ENCODE measurements at regions of chr10 and their contacts with region 1.

Region 1: GRCh38 chr10:89369156-89370105 is 8.4 kb upstream of the IFIT1B start:
- DNase-seq: no peak
- H3K4me3 Mint-ChIP-seq: no peak overlapping the region
- H3K27ac Mint-ChIP-seq: no peak overlapping the region
- H3K4me1 Mint-ChIP-seq: peaks cover 11% of the 10 kb centered on the region
- H3K27me3 Mint-ChIP-seq: no peaks in the 10 kb centered on the region

Region 2: GRCh38 chr10:88565072-88565471 is 804.4 kb before region 1 on chr10:
- CTCF ChIA-PET with region 1: no interaction called
- POLR2A ChIA-PET with region 1: no interaction called
- intact Hi-C with region 1: no loop called
- DNase-seq: no peak
- H3K4me3 Mint-ChIP-seq: no peak overlapping the region
- H3K27ac Mint-ChIP-seq: no peak overlapping the region
- H3K4me1 Mint-ChIP-seq: peaks cover 5% of the 10 kb centered on the region
- H3K27me3 Mint-ChIP-seq: no peaks in the 10 kb centered on the region

Region 3: DNA sequence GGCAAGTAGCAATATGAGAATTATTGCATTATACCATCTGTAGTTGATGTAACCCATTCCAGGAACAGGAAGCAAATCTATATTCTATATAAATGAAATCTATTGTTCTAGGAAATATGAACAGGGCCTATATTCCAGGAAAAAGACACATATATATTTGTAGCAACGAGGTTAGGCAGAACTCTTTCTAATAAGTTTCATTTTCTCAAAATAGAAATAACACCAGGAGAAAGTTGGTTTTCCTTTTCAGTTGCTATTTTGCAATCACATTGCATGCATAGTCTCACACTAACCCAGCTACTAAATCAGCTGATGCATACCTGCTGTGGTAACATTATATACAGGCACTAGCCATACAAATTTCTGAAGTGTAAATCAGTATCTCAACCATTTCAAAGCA is 73.8 kb before region 1 on chr10:
- CTCF ChIA-PET with region 1: interaction called, 14 read pairs
- POLR2A ChIA-PET with region 1: interaction called, 3 read pairs
- intact Hi-C with region 1: loop called (anchors 2 kb)
- DNase-seq: no peak
- H3K4me3 Mint-ChIP-seq: no peak overlapping the region
- H3K27ac Mint-ChIP-seq: no peak overlapping the region
- H3K4me1 Mint-ChIP-seq: peaks cover 11% of the 10 kb centered on the region
- H3K27me3 Mint-ChIP-seq: no peaks in the 10 kb centered on the region

Region 4: DNA sequence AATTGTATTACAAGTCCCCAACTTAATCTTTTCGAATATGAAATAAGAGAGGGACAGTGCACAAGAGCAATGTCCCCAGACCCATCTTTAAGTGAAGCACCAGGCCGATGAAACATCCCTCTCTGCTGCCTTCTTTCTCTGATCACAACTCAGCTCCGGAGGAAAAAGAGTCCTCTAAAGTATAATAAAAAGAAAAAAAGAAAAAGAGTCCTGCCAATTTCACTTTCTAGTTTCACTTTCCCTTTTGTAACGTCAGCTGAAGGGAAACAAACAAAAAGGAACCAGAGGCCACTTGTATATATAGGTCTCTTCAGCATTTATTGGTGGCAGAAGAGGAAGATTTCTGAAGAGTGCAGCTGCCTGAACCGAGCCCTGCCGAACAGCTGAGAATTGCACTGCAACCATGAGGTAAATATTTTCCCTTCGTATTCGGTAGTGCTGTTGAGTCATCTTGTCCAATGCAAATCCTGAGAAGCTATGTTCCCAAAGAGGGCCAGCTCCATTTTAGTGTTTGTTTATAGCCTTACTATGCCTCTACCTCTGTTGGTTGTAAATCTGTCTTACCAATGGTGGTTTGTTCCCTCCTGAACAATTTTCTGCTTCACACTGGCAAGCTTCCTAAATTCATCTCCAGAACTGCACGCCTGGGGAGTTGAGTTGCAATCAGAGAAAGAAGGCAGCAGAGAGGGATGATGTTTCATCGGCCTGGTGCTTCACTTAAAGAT is 67.5 kb before region 1 on chr10 and contains the start of gene IFIT2:
- CTCF ChIA-PET with region 1: interaction called, 8 read pairs
- POLR2A ChIA-PET with region 1: no interaction called
- intact Hi-C with region 1: loop called (anchors 2 kb)
- DNase-seq: peak; percentile 40
- H3K4me3 Mint-ChIP-seq: peak within 1 kb of the TSS; percentile 79
- H3K27ac Mint-ChIP-seq: peak within 1 kb of the TSS; percentile 68
- H3K4me1 Mint-ChIP-seq: peaks cover 32% of the 10 kb centered on the region
- H3K27me3 Mint-ChIP-seq: no peaks in the 10 kb centered on the region
- total RNA-seq, gene IFIT2: 26.6 to 27.7 TPM